Mammary epithelial cell (primary cell): ENCODE measurements at regions of chr5 and their contacts with region 1.

Region 1: DNA sequence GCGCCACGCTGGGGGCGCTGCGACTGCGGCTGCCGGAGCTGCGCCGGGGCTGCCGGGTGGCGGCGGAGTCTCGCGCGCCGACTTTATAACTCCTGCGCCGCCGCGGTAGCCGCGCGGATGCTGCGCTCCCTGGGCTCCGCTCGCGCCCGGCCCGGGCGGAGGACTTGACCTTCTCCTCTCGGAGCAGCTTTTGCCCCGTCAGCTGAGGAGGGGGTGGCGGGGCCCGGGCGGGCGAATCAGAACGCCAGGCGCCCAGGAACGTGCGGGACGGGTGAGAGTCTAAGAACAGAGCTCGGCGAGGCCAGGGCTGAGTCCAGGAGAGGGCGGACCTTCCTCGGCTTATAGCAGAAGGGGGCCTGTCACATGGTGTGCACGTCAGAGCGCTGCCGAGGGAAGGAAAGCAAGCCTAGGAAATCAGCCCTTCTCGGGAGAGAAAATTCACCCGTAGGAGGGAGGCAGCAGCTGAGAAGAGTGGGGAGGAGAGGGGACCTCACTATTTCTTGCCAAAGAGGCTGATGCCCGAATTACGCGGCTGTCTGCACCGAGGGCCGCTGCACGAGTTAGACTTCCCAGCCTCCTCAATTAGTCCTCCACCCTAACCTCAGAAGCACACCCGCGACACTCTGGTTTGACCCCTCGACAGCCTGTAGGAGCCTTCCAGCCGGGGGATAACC is at the start of gene FOXD1:
- DNase-seq: peak; percentile 94
- H3K4me3 ChIP-seq: peak within 1 kb of the TSS; percentile 56 to 67 (median 59)
- H3K27ac ChIP-seq: peak within 1 kb of the TSS; percentile 39
- H3K4me1 ChIP-seq: peaks cover 29% of the 10 kb centered on the region
- H3K27me3 ChIP-seq: peaks cover 14% of the 10 kb centered on the region
- CTCF ChIP-seq: no peak
- total RNA-seq, gene FOXD1: 1.2 to 58.1 TPM

Region 2: GRCh38 chr5:73135429-73136054 is 313.1 kb before region 1 on chr5:
- CTCF ChIA-PET with region 1: no interaction called
- dilution Hi-C with region 1: no loop called
- in situ Hi-C with region 1: no loop called
- intact Hi-C with region 1: loop called (anchors 1 kb)
- DNase-seq: peak; percentile 27
- H3K4me3 ChIP-seq: no peak overlapping the region
- H3K27ac ChIP-seq: no peak overlapping the region
- H3K4me1 ChIP-seq: peaks cover 12% of the 10 kb centered on the region
- H3K27me3 ChIP-seq: no peaks in the 10 kb centered on the region
- CTCF ChIP-seq: peak; percentile 44 to 45

Region 3: DNA sequence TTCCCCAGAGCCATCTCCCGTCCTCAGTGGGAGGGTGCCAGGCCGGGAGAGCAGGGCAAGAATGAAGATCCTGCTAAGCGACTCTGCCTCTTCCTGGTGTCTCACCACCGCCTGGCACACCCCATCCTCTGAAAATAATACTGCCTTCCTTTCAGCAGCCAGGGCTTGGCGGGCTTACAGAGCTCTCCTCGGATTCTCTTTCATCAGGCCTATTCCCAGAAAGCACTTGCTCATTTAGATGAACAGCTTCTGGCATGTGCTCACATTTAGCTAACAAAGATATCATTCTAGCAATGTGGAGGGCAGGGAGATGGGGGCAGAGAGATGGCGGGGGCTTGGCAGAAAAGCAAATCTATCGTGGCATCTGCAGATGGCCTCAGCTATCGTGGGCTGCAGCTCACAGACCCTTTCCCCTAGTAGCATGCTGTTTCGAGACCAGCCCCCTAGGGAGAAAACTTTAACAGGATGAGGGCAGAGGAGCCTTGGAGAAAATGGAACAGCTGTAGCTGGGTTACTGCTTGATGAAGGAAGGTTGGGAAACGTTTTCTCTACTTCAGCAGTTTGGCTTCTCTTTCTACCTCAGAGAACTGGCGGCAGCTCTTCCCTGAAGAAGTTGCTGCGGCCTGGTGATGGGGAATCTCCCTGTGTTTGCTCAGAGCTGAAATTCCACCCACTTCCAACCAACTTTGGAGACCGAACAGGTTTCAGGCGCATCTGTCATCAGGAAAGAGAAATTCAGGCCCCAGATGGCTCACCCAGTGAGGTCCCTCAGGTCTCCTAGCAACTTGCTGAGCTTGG is 173.5 kb before region 1 on chr5:
- CTCF ChIA-PET with region 1: no interaction called
- dilution Hi-C with region 1: no loop called
- in situ Hi-C with region 1: no loop called
- intact Hi-C with region 1: loop called (anchors 5 kb)
- DNase-seq: no peak
- H3K4me3 ChIP-seq: no peak overlapping the region
- H3K27ac ChIP-seq: no peak overlapping the region
- H3K4me1 ChIP-seq: peaks cover 14% of the 10 kb centered on the region
- H3K27me3 ChIP-seq: peaks cover 4% of the 10 kb centered on the region
- CTCF ChIP-seq: no peak

Region 4: DNA sequence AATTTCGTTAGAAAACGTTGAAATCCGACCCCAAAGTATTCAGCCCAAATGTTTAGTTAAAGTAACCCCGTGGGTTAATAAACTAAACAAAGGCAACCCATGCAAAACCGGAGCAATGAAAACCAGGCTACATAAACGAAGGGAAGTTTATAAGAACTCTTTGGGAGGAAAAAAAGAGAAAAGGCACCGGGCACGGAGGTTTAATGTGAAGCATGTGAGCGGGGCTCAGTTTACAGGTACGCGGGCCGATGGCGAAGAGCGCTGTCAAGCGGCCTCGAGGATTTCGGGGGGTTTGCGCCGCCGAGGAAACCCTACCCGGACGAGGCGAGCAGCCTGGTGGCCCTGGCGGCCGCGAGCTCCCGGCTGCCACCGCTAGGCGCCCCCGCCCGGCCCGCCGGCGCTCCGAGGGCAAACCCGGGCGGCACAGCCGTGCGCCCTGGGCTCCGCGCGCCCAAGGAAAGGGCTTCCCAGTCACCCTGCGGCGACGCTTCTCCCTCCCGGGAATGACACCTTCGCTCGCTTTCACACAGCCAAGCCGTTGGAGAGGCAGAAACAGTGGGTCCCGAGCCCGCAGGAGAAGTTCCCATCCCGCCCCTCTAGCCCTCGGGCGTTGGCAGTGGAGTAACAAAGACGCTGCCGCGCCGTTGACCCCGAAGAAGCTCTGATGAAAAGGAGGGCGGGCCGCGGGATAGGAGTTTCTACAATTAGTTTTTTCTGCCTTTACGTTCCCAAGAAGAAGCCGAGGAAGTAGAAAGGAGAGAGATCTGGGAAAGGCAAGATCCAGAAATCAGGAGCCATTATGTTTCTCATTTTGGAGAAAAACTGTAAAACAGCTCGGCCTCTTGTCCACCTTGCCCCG is 149.6 kb before region 1 on chr5:
- CTCF ChIA-PET with region 1: no interaction called
- dilution Hi-C with region 1: no loop called
- in situ Hi-C with region 1: loop called in 1 of 2 experiments (anchors 10 kb)
- intact Hi-C with region 1: loop called (anchors 2 kb)
- DNase-seq: peak; percentile 22
- H3K4me3 ChIP-seq: no peak overlapping the region
- H3K27ac ChIP-seq: no peak overlapping the region
- H3K4me1 ChIP-seq: peaks cover 14% of the 10 kb centered on the region
- H3K27me3 ChIP-seq: peaks cover 38% of the 10 kb centered on the region
- CTCF ChIP-seq: no peak

Region 5: DNA sequence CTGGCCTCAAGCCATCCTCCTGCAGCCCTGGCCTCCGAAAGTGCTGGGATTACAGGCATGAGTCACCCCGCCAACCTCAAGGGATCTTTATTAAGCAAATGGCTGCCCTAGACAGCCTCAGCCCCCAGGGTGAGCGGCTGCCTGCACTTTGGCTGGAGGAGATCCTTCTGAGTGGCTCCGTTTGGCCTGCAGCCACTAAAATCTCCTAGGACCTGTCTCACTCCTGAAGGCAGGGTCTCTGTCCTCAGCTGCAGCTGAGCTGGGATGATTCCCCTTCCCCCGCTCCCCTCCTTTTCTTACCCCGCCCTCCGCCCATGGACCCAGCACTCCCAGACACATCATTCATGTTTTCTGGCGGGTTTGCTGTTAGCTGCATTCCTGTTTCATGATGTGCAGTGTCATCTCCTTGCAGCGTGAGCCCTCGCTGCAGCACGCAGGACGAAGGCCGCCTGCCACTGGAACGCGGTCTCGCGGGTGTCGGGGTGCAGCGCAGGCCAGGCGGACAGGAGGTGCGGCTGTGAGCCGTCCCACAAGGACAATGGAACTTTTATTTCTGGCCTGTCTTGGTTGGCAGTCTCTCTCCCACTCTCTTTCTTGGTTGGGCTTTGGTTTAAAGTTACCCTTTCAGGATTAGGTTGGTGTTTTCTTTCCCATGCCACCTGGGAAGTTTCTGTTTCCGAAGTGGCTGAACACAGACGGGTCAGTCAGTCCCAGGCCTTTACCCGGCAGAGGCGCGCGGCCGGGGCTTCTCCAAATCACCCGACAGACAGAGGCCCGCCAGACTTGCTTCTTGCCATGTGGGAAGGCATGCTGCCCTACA is 137.1 kb before region 1 on chr5:
- CTCF ChIA-PET with region 1: no interaction called
- dilution Hi-C with region 1: no loop called
- in situ Hi-C with region 1: loop called in 1 of 2 experiments (anchors 10 kb)
- intact Hi-C with region 1: loop called (anchors 1 kb)
- DNase-seq: peak; percentile 85
- H3K4me3 ChIP-seq: peak overlapping the region in 1 of 3 experiments; percentile 3
- H3K27ac ChIP-seq: peak overlapping the region; percentile 63
- H3K4me1 ChIP-seq: peaks cover 29% of the 10 kb centered on the region
- H3K27me3 ChIP-seq: no peaks in the 10 kb centered on the region
- CTCF ChIP-seq: no peak

Region 6: DNA sequence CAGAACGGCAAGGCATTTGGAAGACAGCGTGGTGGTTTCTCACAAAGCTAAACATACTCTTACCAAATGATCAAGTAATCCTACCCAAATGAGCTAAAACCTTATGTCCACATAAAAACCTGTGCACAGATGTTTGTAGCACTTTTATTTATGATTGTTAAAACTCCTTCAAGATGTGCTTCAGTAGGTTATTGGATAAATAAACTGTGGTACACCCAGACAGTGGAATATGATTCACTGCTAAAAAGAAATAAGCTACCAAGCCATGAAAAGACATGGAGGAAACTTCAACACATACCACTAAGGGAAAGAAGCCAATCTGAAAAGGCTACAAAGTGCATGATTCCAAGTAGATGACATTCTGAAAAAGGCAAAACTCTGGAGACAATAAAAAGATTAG is 94.2 kb before region 1 on chr5:
- CTCF ChIA-PET with region 1: no interaction called
- dilution Hi-C with region 1: no loop called
- in situ Hi-C with region 1: no loop called
- intact Hi-C with region 1: no loop called
- DNase-seq: no peak
- H3K4me3 ChIP-seq: no peak overlapping the region
- H3K27ac ChIP-seq: no peak overlapping the region
- H3K4me1 ChIP-seq: no peaks in the 10 kb centered on the region
- H3K27me3 ChIP-seq: no peaks in the 10 kb centered on the region
- CTCF ChIP-seq: no peak

Region 7: DNA sequence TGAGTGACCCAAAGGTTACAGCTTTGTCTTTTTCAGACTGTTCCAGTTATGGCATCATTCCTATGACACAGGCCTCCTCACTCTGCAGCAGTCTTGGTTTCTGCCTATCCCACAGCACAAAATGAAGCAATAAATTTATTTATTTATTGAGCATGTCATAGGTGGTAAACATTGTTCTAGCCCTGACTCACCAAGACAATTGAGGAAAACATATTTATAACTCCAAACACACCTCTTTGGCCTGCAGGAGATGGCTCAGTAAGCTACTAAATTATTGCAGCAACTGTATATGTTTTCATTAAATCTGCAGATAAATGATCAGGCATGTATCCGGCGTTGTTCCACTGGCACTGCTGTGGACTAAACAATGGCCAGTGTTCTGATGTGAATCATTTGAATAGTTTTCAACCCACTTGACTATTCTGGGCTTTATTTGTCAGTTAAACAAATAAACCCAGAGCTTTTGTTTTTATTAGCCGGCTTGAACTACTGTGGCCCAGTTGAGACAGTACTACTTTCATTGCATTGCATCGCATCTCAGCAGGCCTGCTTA is 83.2 kb before region 1 on chr5:
- CTCF ChIA-PET with region 1: interaction called, 7 read pairs
- dilution Hi-C with region 1: no loop called
- in situ Hi-C with region 1: no loop called
- intact Hi-C with region 1: loop called (anchors 1 kb)
- DNase-seq: peak; percentile 91
- H3K4me3 ChIP-seq: no peak overlapping the region
- H3K27ac ChIP-seq: peak overlapping the region; percentile 80
- H3K4me1 ChIP-seq: peaks cover 46% of the 10 kb centered on the region
- H3K27me3 ChIP-seq: no peaks in the 10 kb centered on the region
- CTCF ChIP-seq: no peak

Region 8: GRCh38 chr5:73412597-73412988 is 36.0 kb before region 1 on chr5:
- CTCF ChIA-PET with region 1: no interaction called
- dilution Hi-C with region 1: no loop called
- in situ Hi-C with region 1: no loop called
- intact Hi-C with region 1: loop called (anchors 5 kb)
- DNase-seq: peak; percentile 95
- H3K4me3 ChIP-seq: no peak overlapping the region
- H3K27ac ChIP-seq: peak overlapping the region; percentile 64
- H3K4me1 ChIP-seq: peaks cover 27% of the 10 kb centered on the region
- H3K27me3 ChIP-seq: no peaks in the 10 kb centered on the region
- CTCF ChIP-seq: no peak